WTC11 (cell line): ENCODE measurements at regions of chr6 and their contacts with region 1.

Region 1: DNA sequence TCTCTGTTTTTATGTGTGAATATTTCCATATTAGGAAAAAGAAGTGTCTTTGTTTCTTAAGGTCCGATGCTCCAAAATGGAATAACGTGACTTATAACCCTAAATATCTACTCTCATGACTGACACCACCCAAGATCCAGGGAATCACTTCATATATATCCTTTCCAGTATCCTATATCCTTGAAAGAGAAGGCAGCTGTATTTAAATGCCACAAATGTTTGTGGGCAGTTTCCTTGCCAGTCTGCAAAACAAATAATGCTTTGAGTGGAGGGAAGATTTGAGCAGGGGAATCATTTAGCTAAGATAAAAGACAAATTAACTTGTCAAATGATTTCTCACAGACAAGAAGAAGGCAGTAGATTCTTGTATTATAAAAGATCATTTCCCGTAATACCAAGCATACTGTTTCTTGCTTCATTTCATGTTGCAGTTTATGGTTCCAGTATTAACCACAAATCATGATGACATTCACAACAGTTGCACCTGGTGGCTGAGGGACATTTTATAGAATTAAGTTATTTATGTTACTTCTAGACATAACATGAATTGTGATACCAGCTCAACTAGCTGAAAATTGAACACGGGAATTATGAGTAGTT is 30.0 kb upstream of the FABP7 start:
- DNase-seq: no peak
- ATAC-seq: no peak
- H3K4me3 Mint-ChIP-seq: no peak overlapping the region
- H3K27ac Mint-ChIP-seq: no peak overlapping the region
- H3K4me1 Mint-ChIP-seq: peaks cover 27% of the 10 kb centered on the region
- H3K27me3 Mint-ChIP-seq: peaks cover 84% of the 10 kb centered on the region
- CTCF ChIP-seq: no peak

Region 2: GRCh38 chr6:122789182-122790027 is 39.9 kb after region 1 on chr6 and contains the start of gene SMPDL3A:
- CTCF ChIA-PET with region 1: interaction called, 11 read pairs
- POLR2A ChIA-PET with region 1: no interaction called
- DNase-seq: peak; percentile 81
- ATAC-seq: peak; percentile 81
- H3K4me3 Mint-ChIP-seq: peak within 1 kb of the TSS; percentile 75
- H3K27ac Mint-ChIP-seq: peak within 1 kb of the TSS; percentile 98
- H3K4me1 Mint-ChIP-seq: peaks cover 59% of the 10 kb centered on the region
- H3K27me3 Mint-ChIP-seq: peaks cover 52% of the 10 kb centered on the region
- CTCF ChIP-seq: no peak
- total RNA-seq, gene SMPDL3A: 2.0 to 2.8 TPM (median 2.1 TPM) in 3 replicates

Region 3: DNA sequence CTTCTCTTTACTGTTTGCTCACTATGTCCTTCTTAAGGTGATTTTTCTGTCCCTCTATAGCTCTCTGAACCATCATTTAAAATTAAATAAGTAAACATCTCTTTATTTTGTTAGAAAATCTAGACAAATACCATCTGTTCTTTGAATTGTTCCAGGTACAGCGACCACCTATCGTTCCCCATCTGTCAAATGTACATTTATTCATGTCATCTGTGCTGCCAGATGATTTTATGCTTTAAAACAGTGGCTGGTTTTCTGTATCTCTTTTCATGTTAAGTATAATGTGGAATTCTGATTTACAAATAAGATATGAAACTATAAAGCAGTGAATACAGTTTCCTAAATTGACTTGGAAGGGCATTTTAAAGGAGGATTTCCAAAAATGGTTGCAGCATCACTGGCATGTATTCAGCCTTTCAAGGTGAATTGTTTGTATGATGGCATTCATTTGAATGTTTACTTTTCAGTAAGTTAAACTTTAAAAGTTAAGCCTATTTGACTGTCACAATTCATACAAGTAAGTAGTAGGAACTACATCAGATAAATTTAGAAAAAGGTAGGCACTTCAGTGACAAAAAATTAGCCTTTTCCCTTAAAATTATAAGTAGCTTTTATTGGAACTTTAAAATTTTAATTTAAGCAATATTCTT is 153.8 kb after region 1 on chr6:
- CTCF ChIA-PET with region 1: no interaction called
- POLR2A ChIA-PET with region 1: no interaction called
- DNase-seq: no peak
- ATAC-seq: no peak
- H3K4me3 Mint-ChIP-seq: no peak overlapping the region
- H3K27ac Mint-ChIP-seq: no peak overlapping the region
- H3K4me1 Mint-ChIP-seq: peaks cover 5% of the 10 kb centered on the region; the same call in 1 of the 2 replicates
- H3K27me3 Mint-ChIP-seq: no peaks in the 10 kb centered on the region
- CTCF ChIP-seq: no peak